Natural killer cell (primary cell): ENCODE measurements at regions of chr20 and their contacts with region 1.

Region 1: DNA sequence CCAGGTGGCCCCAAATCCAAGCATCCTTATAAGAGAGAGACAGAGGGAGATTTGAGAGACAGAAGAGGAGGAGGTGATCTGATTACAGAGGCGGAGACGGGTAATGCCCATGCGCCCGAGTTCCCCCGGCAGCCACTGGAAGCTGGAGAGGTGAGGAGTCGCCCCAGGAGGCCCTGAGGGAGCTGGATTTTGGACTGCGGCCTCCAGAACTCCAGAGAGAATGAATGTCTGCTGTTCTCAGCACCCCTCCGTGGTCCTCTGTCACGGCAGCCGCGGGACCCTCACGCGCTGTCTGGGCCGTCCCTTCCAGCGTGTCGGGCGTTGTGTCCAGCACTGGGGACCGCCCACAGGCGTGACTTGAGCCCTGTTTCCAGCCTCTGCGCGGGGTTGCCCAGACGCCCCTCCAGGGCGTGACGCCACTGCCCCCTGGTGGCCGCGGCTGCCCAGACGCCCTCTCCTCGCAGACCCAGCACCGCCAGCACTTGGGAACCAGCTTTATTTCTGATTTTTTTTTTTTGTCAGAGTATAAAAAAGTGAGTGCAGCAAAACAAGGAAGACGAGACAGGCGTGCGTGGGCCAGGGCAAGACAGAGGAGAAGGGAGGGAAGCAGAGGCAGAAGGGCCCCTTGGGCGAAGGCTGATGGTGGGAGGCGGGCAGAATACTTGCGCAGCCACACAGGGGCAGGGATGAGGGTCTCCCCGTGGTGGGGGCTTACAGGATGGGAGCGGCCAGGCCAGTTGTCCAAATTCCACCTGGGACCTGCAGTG is 4.1 kb upstream of the ZNF512B start:
- DNase-seq: peak; percentile 85 to 87
- ATAC-seq: peak; percentile 39 to 67 (median 61)
- H3K4me3 ChIP-seq: no peak overlapping the region
- H3K4me3 Mint-ChIP-seq: peak overlapping the region; percentile 64
- H3K27ac ChIP-seq: no peak overlapping the region
- H3K27ac Mint-ChIP-seq: peak overlapping the region; percentile 57 to 81
- H3K4me1 ChIP-seq: peaks cover 41% of the 10 kb centered on the region
- H3K4me1 Mint-ChIP-seq: peaks cover 33 to 44% of the 10 kb centered on the region in 2 donors
- H3K27me3 ChIP-seq: no peaks in the 10 kb centered on the region
- H3K27me3 Mint-ChIP-seq: no peaks in the 10 kb centered on the region
- CTCF ChIP-seq: peak; percentile 98

Region 2: DNA sequence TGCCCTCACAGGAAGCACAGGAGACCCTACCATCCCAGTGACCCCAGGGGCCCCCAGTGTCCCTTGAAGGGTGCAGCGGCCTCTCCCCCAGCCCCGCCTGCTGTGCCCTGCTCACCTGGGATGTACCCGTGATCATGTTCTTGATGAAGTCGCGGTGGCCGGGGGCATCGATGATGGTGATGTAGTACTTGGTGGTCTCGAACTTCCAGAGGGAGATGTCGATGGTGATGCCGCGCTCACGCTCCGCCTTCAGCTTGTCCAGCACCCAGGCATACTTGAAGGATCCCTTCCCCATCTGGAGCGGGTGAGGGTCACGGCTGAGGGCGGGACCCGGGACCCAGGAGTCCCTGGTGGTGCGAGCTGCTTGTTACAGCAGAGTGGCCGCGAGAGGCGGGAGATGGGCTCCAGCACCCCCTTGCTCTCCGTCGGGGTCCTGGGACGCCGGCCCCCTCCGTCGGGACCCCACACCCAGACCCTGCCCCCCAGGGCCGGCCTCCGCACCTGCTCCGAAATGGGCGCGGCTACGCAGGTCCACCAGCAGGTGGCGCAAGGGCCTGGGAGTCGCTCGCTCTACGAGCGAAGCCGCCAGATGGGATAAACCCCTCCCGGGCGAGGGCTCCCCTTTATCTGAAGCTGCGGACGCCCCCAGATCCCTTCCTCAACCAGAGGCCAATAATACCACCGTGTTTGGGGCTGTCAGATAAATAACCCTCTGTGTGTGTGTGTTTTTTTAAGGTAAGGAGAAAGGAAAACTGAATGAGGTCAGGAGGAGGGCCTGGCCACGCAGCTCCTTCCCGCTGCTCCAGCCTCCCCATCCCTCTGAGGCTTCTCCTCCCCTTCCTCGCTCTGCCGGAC is 477.9 kb before region 1 on chr20:
- intact Hi-C with region 1: loop called (anchors 5 kb)
- DNase-seq: peak; percentile 72 to 88
- ATAC-seq: peak; percentile 69 to 78 (median 75)
- H3K4me3 ChIP-seq: no peak overlapping the region
- H3K4me3 Mint-ChIP-seq: peak overlapping the region; percentile 53
- H3K27ac ChIP-seq: no peak overlapping the region
- H3K27ac Mint-ChIP-seq: no peak overlapping the region
- H3K4me1 ChIP-seq: peaks cover 25% of the 10 kb centered on the region
- H3K4me1 Mint-ChIP-seq: no peaks in the 10 kb centered on the region
- H3K27me3 ChIP-seq: peaks cover 37% of the 10 kb centered on the region
- H3K27me3 Mint-ChIP-seq: peaks cover 0 to 5% of the 10 kb centered on the region in 2 donors
- CTCF ChIP-seq: peak; percentile 92

Region 3: GRCh38 chr20:63785691-63786131 is 188.1 kb before region 1 on chr20:
- intact Hi-C with region 1: loop called (anchors 5 kb)
- DNase-seq: no peak
- ATAC-seq: no peak
- H3K4me3 ChIP-seq: no peak overlapping the region
- H3K4me3 Mint-ChIP-seq: no peak overlapping the region
- H3K27ac ChIP-seq: no peak overlapping the region
- H3K27ac Mint-ChIP-seq: no peak overlapping the region
- H3K4me1 ChIP-seq: peaks cover 7% of the 10 kb centered on the region
- H3K4me1 Mint-ChIP-seq: no peaks in the 10 kb centered on the region
- H3K27me3 ChIP-seq: no peaks in the 10 kb centered on the region
- H3K27me3 Mint-ChIP-seq: peaks cover 0 to 3% of the 10 kb centered on the region in 2 donors
- CTCF ChIP-seq: no peak

Region 4: DNA sequence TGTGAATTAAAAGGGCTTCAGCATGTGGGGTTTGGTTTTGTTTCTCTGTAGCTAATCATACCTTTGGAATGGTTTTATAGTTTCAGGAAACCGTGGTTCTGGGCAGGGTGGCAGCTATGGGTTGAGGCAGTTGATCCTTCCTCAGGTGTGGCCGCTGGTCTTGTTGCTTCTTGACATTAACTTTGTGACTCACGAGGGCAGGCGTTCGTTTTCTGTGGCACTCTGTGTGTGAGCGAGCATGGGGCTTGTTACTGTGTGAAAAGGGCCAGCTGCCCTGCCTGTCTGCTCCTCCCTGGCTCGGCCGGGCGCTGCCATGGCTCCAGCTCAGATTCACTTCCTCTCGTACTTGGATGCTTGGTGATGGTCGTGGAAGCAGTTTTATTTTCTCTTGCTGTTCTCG is 62.6 kb before region 1 on chr20:
- intact Hi-C with region 1: loop called (anchors 5 kb)
- DNase-seq: no peak
- ATAC-seq: no peak
- H3K4me3 ChIP-seq: no peak overlapping the region
- H3K4me3 Mint-ChIP-seq: no peak overlapping the region
- H3K27ac ChIP-seq: no peak overlapping the region
- H3K27ac Mint-ChIP-seq: peak overlapping the region; percentile 68 to 74
- H3K4me1 ChIP-seq: peaks cover 19% of the 10 kb centered on the region
- H3K4me1 Mint-ChIP-seq: peaks cover 39 to 42% of the 10 kb centered on the region in 2 donors
- H3K27me3 ChIP-seq: no peaks in the 10 kb centered on the region
- H3K27me3 Mint-ChIP-seq: no peaks in the 10 kb centered on the region
- CTCF ChIP-seq: no peak

Region 5: GRCh38 chr20:64001607-64002011 is 27.8 kb after region 1 on chr20:
- intact Hi-C with region 1: no loop called
- DNase-seq: no peak
- ATAC-seq: no peak
- H3K4me3 ChIP-seq: no peak overlapping the region
- H3K4me3 Mint-ChIP-seq: no peak overlapping the region
- H3K27ac ChIP-seq: no peak overlapping the region
- H3K27ac Mint-ChIP-seq: no peak overlapping the region
- H3K4me1 ChIP-seq: no peaks in the 10 kb centered on the region
- H3K4me1 Mint-ChIP-seq: peaks cover 0 to 4% of the 10 kb centered on the region in 2 donors
- H3K27me3 ChIP-seq: no peaks in the 10 kb centered on the region
- H3K27me3 Mint-ChIP-seq: no peaks in the 10 kb centered on the region
- CTCF ChIP-seq: no peak